Calu3 (cell line): ENCODE measurements at regions of chr10 and their contacts with region 1.

Region 1: GRCh38 chr10:24642622-24643417 is 80.9 kb downstream of the ARHGAP21 start:
- DNase-seq: peak; percentile 52
- H3K4me3 Mint-ChIP-seq: no peak overlapping the region
- H3K27ac Mint-ChIP-seq: no peak overlapping the region
- H3K4me1 Mint-ChIP-seq: no peaks in the 10 kb centered on the region
- H3K27me3 Mint-ChIP-seq: no peaks in the 10 kb centered on the region
- CTCF ChIP-seq: peak; percentile 51

Region 2: DNA sequence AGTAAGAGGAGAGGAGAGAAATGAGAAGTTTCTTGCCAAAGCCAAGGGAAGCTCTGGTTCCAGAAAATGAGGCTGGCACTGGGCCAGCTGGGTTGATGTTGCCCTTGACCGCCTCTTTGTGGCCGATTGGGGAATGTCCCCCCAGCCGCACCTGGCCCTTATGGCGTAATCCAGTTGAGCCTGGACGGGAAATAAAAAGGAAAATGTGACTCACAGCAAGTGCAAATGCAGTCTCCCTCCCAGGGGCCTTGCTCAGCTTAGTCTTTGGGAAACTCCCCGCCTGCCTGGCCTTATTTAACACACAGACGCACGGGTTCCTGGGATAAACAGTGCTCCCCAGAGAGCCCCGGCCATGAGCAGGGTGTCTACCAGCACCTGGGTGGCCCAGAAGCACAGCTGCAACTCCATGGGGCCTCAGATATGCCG is 259.1 kb before region 1 on chr10:
- CTCF ChIA-PET with region 1: no interaction called
- intact Hi-C with region 1: no loop called
- DNase-seq: peak; percentile 95
- H3K4me3 Mint-ChIP-seq: peak overlapping the region; percentile 60
- H3K27ac Mint-ChIP-seq: peak overlapping the region; percentile 96
- H3K4me1 Mint-ChIP-seq: peaks cover 28% of the 10 kb centered on the region
- H3K27me3 Mint-ChIP-seq: no peaks in the 10 kb centered on the region
- CTCF ChIP-seq: peak; percentile 52

Region 3: GRCh38 chr10:24425151-24425550 is 217.7 kb before region 1 on chr10:
- CTCF ChIA-PET with region 1: no interaction called
- intact Hi-C with region 1: no loop called
- DNase-seq: no peak
- H3K4me3 Mint-ChIP-seq: no peak overlapping the region
- H3K27ac Mint-ChIP-seq: no peak overlapping the region
- H3K4me1 Mint-ChIP-seq: peaks cover 18% of the 10 kb centered on the region
- H3K27me3 Mint-ChIP-seq: no peaks in the 10 kb centered on the region
- CTCF ChIP-seq: no peak

Region 4: DNA sequence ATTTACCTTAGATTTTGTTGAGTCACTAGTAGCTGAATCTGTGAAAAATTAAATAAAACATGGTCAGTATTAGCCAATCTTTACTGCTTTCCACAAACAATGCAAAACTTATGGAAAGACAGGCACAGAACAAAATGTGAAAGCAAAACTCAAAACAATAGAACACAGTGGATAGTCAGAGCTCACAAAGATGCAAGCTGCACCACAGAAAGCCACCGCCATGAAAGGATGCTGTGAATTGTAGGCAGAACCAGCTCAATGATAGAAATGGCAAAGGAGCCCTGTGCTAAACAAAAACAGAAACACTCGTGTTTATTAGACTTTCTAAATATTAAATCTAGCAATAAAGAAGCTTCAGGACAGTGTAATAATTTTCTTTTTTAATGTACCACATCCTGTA is 53.6 kb before region 1 on chr10:
- CTCF ChIA-PET with region 1: no interaction called
- intact Hi-C with region 1: no loop called
- DNase-seq: no peak
- H3K4me3 Mint-ChIP-seq: no peak overlapping the region
- H3K27ac Mint-ChIP-seq: no peak overlapping the region
- H3K4me1 Mint-ChIP-seq: no peaks in the 10 kb centered on the region
- H3K27me3 Mint-ChIP-seq: no peaks in the 10 kb centered on the region
- CTCF ChIP-seq: no peak

Region 5: GRCh38 chr10:24724381-24725228 is 81.8 kb after region 1 on chr10:
- CTCF ChIA-PET with region 1: interaction called, 3 read pairs
- intact Hi-C with region 1: loop called (anchors 2 kb)
- DNase-seq: peak; percentile 98
- H3K4me3 Mint-ChIP-seq: no peak overlapping the region
- H3K27ac Mint-ChIP-seq: peak overlapping the region; percentile 88
- H3K4me1 Mint-ChIP-seq: peaks cover 6% of the 10 kb centered on the region
- H3K27me3 Mint-ChIP-seq: no peaks in the 10 kb centered on the region
- CTCF ChIP-seq: no peak

Region 6: DNA sequence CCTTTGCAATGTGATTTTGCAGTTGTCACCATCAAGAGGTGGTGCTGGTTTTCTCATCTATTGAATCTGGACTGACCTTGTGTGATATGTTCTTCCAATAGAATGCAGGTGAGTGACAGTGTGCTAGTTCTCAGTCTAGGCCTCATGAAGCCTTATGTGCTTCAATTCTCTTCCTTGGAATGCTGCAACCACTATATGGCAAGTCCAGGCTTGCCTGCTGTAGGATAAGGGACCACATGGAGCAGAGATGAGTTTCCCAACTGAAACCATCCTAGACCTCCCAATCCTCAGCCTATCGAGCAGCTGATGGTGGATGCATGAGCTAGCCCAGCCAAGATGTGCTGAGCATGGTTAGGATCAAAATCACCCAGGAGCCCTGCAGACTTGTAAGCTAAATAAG is 113.5 kb after region 1 on chr10:
- CTCF ChIA-PET with region 1: no interaction called
- intact Hi-C with region 1: no loop called
- DNase-seq: no peak
- H3K4me3 Mint-ChIP-seq: no peak overlapping the region
- H3K27ac Mint-ChIP-seq: no peak overlapping the region
- H3K4me1 Mint-ChIP-seq: no peaks in the 10 kb centered on the region
- H3K27me3 Mint-ChIP-seq: no peaks in the 10 kb centered on the region
- CTCF ChIP-seq: no peak

Region 7: GRCh38 chr10:24849501-24850299 is 206.9 kb after region 1 on chr10:
- CTCF ChIA-PET with region 1: no interaction called
- intact Hi-C with region 1: loop called (anchors 5 kb)
- DNase-seq: peak; percentile 31
- H3K4me3 Mint-ChIP-seq: peak overlapping the region; percentile 46
- H3K27ac Mint-ChIP-seq: peak overlapping the region; percentile 42
- H3K4me1 Mint-ChIP-seq: peaks cover 28% of the 10 kb centered on the region
- H3K27me3 Mint-ChIP-seq: no peaks in the 10 kb centered on the region
- CTCF ChIP-seq: no peak

Region 8: GRCh38 chr10:24989867-24990266 is 347.0 kb after region 1 on chr10:
- CTCF ChIA-PET with region 1: interaction called, 6 read pairs
- intact Hi-C with region 1: loop called (anchors 1 kb)
- DNase-seq: no peak
- H3K4me3 Mint-ChIP-seq: no peak overlapping the region
- H3K27ac Mint-ChIP-seq: no peak overlapping the region
- H3K4me1 Mint-ChIP-seq: no peaks in the 10 kb centered on the region
- H3K27me3 Mint-ChIP-seq: no peaks in the 10 kb centered on the region
- CTCF ChIP-seq: no peak

Region 9: GRCh38 chr10:25016376-25017154 is 373.7 kb after region 1 on chr10 and contains the start of gene THNSL1:
- CTCF ChIA-PET with region 1: interaction called, 3 read pairs
- intact Hi-C with region 1: loop called (anchors 1 kb)
- DNase-seq: peak; percentile 99
- H3K4me3 Mint-ChIP-seq: peak within 1 kb of the TSS; percentile 93
- H3K27ac Mint-ChIP-seq: peak within 1 kb of the TSS; percentile 99
- H3K4me1 Mint-ChIP-seq: peaks cover 16% of the 10 kb centered on the region
- H3K27me3 Mint-ChIP-seq: no peaks in the 10 kb centered on the region
- CTCF ChIP-seq: no peak
- total RNA-seq, gene THNSL1: 6.6 and 7.0 TPM in 2 replicates

Region 10: DNA sequence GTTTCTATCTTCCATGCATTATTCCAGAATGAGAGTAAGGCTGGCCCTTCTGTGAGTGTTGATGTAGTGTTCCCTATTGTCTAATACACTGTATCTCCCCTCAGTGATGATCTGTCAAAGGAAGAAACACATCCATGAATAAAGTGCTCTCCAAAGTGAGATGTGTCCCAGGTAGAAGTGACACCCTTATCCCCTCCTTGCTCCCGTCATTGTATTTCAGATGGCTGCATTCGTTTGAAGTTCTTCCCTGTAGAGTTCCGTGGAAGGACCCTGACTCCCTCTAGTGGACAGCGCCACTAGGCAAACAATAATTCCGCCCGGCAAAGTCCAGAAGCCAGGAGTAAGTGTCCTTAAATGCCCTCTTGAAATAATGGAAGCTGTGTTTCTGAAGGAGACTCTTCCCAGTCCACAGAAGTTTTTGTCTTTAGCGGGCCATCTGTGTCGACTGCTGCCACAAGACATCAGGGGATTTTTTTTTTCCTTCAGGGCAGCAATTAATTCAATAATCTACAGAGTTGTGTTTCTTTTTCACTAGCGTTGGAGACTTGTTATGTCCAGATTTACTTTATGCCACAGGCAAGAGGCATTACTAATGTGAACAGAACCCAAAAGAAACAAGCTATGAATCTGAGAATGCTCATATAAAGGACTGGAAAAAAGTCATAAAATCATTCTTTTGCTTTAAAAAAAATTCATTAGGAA is 438.2 kb after region 1 on chr10:
- CTCF ChIA-PET with region 1: interaction called, 7 read pairs
- intact Hi-C with region 1: loop called (anchors 1 kb)
- DNase-seq: peak; percentile 87
- H3K4me3 Mint-ChIP-seq: no peak overlapping the region
- H3K27ac Mint-ChIP-seq: no peak overlapping the region
- H3K4me1 Mint-ChIP-seq: peaks cover 25% of the 10 kb centered on the region
- H3K27me3 Mint-ChIP-seq: no peaks in the 10 kb centered on the region
- CTCF ChIP-seq: peak; percentile 82

Region 11: DNA sequence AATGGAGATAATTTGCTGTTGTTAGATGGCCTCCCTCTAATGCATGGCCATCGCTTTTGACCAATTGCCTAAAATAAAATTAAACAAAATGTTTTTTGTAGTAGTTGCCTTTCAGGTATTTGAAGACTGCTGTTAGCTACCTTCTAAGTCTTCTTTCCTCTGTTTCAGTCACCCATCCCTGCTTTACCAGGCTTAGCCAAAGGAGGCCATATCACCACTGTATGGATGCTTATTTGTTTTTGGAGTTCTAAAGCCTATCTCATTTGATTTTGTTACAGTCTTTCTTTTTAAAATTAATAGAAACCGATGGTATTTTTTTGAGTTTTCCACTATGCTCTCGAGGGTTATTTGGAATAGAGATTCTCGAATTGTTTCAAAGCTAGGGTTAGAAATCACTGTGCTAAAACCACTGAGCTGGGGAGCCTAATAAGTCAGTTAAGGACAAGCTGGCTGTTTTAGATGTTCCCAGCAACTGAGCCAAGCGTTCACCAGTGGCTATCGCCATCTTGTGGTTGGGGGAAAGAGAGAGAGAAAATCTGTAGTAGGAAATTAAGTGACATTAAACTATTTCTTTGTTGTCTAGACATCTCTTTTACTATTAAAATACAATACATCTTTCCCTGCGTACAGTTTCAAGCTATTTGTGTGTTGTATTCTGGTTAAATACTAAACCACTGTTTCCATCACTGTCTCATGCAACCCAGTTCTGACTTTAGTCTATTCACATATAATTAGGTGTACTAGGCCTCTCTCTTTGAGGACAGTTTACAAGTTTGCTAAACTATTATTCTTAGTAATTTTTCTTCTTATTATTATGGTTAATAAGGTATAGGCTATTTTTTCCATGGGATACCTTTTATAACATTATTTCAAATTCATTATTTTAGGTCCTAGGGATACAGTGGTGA is 584.2 kb after region 1 on chr10:
- CTCF ChIA-PET with region 1: no interaction called
- intact Hi-C with region 1: loop called (anchors 5 kb)
- DNase-seq: peak; percentile 59
- H3K4me3 Mint-ChIP-seq: no peak overlapping the region
- H3K27ac Mint-ChIP-seq: no peak overlapping the region
- H3K4me1 Mint-ChIP-seq: no peaks in the 10 kb centered on the region
- H3K27me3 Mint-ChIP-seq: no peaks in the 10 kb centered on the region
- CTCF ChIP-seq: peak; percentile 72